GM12878 (cell line): ENCODE measurements at regions of chr9 and their contacts with region 1.

Region 1: DNA sequence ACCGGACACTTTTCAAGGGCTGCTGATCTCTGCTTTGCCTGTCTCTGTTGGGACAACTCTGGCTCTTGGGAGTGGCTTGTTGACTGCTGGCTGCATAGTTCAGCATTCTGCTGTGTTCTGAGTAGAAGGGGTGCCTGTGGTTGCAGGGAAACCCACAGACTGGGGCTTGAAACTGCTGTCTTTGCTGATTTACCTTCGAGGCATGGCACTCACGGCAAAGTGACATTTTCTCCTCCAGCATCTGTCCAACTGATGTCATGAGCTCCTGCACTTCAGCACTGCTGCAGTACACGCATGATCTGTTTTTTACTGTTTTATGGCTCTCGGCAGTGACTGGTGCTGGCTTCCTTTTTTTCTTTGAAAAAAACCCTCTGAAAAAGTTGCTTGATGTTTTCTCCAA is 69.2 kb downstream of the SPATA31D1 start:
- DNase-seq: no peak
- ATAC-seq: no peak
- H3K4me3 ChIP-seq: no peak overlapping the region
- H3K27ac ChIP-seq: no peak overlapping the region
- H3K4me1 ChIP-seq: no peaks in the 10 kb centered on the region
- H3K27me3 ChIP-seq: no peaks in the 10 kb centered on the region
- CTCF ChIP-seq: no peak
- EP300 ChIP-seq: no peak
- POLR2A ChIP-seq: no peak
- RAD21 ChIP-seq: no peak

Region 2: DNA sequence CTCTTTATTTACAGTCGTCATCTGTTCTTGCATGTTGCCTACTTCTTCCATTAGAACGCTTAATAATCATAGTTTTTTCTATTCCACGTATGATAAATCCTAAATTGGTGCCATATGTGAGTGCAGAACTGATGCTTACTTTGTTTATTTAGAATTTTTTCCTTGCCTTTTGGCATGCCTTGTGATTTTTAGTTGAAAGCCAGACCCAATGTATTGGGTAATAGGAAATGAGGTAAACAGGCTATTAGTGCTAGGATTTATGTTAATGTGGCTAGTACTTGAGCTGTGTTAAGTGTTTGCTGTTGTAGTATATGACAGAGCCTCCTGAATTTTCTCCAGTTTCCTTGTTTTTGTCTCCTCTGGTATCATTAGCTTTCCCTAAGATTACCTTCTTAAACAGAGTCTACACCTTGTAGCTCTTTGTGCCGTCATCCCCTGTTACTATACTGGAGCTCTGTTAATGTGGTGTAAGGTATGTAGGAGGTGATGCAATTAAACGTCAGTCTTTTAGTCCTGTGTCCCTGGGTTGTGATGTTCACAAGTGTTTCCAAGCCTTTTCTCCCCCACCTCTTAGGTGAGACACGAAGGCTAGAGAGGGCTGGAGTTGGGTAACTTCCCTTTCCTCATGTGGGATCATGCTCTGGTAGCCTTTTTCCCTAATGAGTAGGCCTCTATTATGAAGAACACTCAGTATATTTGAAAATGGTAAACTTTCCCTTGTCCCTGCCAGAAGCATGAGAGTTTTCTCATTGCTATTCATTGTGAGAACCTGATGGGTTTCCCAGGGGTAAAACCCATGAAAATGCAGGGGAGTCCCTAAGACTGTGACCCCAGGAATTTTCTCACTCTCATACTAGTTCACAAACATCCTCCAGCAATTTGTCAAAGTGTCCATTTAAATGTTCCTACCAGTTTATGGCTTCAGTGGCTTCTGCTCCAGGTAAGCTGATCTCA is 93.3 kb before region 1 on chr9:
- CTCF ChIA-PET with region 1: no interaction called
- POLR2A ChIA-PET with region 1: no interaction called
- RAD21 ChIA-PET with region 1: no interaction called
- SMC1A ChIA-PET with region 1: no interaction called
- in situ Hi-C with region 1: loop called (anchors 25 kb)
- intact Hi-C with region 1: no loop called
- DNase-seq: no peak
- ATAC-seq: no peak
- H3K4me3 ChIP-seq: no peak overlapping the region
- H3K27ac ChIP-seq: no peak overlapping the region
- H3K4me1 ChIP-seq: no peaks in the 10 kb centered on the region
- H3K27me3 ChIP-seq: no peaks in the 10 kb centered on the region
- CTCF ChIP-seq: no peak
- EP300 ChIP-seq: no peak
- POLR2A ChIP-seq: no peak
- RAD21 ChIP-seq: no peak